ENCODE measurements at regions of chr17 and their contacts with region 1.

Region 1: DNA sequence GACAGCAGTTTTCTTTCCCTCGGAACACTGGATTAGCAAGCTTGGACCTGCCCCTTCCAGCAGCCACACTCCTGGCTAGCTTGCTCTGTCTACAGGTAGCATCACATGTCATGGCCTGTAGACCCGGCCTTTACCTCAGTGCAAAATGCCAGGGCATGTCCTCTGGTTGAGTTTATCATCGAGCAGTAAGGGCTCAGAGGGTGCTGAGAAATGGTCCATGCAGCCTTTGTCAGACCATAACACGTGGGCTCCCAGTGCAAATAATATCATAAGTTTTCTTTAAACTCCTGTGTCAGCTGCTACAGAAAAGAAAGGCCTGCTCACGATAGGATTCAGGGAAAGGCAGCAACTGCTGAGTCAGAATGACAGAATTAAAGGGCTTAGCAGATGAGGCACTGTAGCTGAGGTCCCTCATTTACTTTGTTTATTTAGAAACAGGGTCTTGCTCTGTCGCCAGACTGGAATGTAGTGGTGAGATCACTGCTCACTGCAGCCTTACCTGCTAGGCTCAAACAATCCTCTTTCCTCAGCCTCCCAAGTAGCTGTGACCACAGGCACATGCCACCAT is 8.0 kb upstream of the GNA13 start:
- DNase-seq: no peak
- ATAC-seq: no peak
- H3K4me3 ChIP-seq: no peak overlapping the region
- H3K4me3 Mint-ChIP-seq: no peak overlapping the region
- H3K27ac ChIP-seq: no peak overlapping the region
- H3K27ac Mint-ChIP-seq: no peak overlapping the region
- H3K4me1 ChIP-seq: no peaks in the 10 kb centered on the region
- H3K4me1 Mint-ChIP-seq: no peaks in the 10 kb centered on the region
- H3K27me3 ChIP-seq: no peaks in the 10 kb centered on the region
- H3K27me3 Mint-ChIP-seq: peaks cover 2% of the 10 kb centered on the region
- CTCF ChIP-seq: no peak

Region 2: GRCh38 chr17:65078441-65079160 is 14.1 kb after region 1 on chr17:
- CTCF ChIA-PET with region 1: no interaction called
- POLR2A ChIA-PET with region 1: no interaction called
- intact Hi-C with region 1: loop called in 1 of 2 experiments (anchors 1 kb)
- DNase-seq: no peak
- ATAC-seq: no peak
- H3K4me3 ChIP-seq: no peak overlapping the region
- H3K4me3 Mint-ChIP-seq: no peak overlapping the region
- H3K27ac ChIP-seq: no peak overlapping the region
- H3K27ac Mint-ChIP-seq: no peak overlapping the region
- H3K4me1 ChIP-seq: no peaks in the 10 kb centered on the region
- H3K4me1 Mint-ChIP-seq: no peaks in the 10 kb centered on the region
- H3K27me3 ChIP-seq: no peaks in the 10 kb centered on the region
- H3K27me3 Mint-ChIP-seq: peaks cover 2% of the 10 kb centered on the region
- CTCF ChIP-seq: no peak

Measured in CD8-positive, alpha-beta T cell (primary cell).